ENCODE measurements at regions of chr9 and their contacts with region 1.

Region 1: GRCh38 chr9:72779614-72780013 is 173.2 kb downstream of the ALDH1A1 start:
- DNase-seq: no peak
- ATAC-seq: no peak
- H3K4me3 ChIP-seq: no peak overlapping the region
- H3K27ac ChIP-seq: no peak overlapping the region
- H3K4me1 ChIP-seq: no peaks in the 10 kb centered on the region
- H3K27me3 ChIP-seq: no peaks in the 10 kb centered on the region
- CTCF ChIP-seq: no peak

Region 2: GRCh38 chr9:72232778-72233177 is 546.8 kb before region 1 on chr9:
- intact Hi-C with region 1: loop called in 1 of 3 experiments (anchors 5 kb)
- DNase-seq: no peak
- ATAC-seq: no peak
- H3K4me3 ChIP-seq: no peak overlapping the region
- H3K27ac ChIP-seq: no peak overlapping the region
- H3K4me1 ChIP-seq: no peaks in the 10 kb centered on the region
- H3K27me3 ChIP-seq: no peaks in the 10 kb centered on the region
- CTCF ChIP-seq: no peak

Region 3: DNA sequence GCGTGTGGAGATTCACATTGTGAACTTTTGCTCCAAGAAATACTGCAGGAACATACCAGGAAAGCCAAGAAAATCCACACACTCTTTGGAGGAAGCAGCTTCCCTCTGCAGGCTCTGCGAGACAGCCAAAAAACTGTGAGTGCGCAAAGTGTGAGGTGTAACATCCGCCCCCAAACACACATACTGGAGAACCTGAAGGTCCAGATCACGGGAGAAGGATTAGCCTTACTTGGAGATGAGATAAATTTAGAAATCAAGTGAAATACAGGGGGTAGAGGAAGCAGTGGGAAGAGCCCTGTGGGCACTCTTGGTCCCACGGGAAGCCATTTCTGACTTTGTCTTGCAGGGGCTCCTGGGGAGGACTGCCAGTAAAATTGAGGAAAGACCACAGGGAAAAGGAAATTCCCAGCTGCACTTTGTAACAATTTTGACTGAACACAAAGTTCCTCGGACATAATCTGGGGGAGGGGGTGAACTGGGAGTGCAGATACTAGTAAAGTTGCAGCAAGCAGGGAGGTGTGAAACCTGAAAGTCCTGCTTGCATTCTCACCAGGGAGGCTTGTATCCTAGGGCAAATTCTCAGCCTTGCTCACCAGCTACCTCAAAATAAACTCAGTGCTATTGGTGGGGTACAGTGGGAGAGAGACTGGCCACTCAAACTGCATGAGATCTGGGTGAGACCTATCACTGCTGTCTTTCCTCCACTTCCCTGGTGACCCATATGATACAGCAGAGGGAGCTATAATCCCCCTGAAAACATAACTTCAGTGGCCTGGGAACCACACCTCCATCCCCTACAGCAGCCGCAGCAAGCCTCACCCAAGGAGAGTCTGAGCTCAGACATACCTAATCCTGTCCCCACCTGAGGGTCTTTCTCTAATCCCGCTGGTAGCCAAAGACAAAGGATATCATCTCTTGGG is 64.2 kb after region 1 on chr9:
- intact Hi-C with region 1: no loop called
- DNase-seq: no peak
- ATAC-seq: no peak
- H3K4me3 ChIP-seq: no peak overlapping the region
- H3K27ac ChIP-seq: no peak overlapping the region
- H3K4me1 ChIP-seq: no peaks in the 10 kb centered on the region
- H3K27me3 ChIP-seq: no peaks in the 10 kb centered on the region
- CTCF ChIP-seq: no peak